ENCODE measurements at regions of chr12 and their contacts with region 1.

Region 1: DNA sequence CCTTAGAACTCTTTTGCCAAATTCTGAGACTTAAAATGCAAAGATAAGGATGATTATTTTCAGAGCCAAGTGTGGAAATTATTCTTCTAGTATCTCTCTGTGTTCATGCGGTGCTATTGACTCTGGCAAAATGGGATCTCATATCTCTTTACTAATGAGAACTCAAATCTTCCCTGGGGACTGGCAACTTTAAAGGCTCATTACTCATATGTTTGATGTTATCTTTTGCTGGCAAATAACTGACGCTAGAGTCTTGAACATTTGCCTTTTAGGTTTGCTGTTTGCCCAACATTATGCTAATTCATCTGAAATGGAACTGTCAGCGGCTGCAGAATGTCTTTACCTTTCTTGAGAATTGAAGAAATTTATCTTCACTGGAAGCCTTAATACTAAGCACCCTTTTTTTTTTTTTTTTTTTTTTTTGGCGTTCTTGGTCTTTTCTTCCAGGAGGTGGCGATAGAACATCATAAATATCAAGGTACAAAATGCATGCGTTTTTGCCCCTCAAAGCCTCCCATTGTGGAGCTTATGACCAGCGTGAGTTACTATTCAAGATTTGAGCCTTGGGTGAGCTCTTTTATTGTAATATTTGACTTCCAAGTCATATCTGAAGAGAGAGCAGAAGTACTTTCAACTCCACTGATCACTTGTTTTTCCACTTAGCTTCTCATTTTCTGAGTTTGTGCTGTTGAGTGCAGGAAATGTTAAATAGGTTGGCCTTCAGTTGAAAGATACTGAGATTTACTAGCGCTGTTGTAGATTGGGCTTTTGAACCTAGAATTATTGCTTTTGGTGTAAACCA is 86.6 kb downstream of the CAND1 start:
- DNase-seq: peak; percentile 39
- H3K4me3 ChIP-seq: no peak overlapping the region
- H3K27ac ChIP-seq: no peak overlapping the region
- H3K4me1 ChIP-seq: no peaks in the 10 kb centered on the region
- H3K27me3 ChIP-seq: no peaks in the 10 kb centered on the region
- CTCF ChIP-seq: peak; percentile 26 to 67

Region 2: GRCh38 chr12:66763467-66763866 is 592.3 kb before region 1 on chr12:
- CTCF ChIA-PET with region 1: interaction called, 20 read pairs
- dilution Hi-C with region 1: no loop called
- in situ Hi-C with region 1: no loop called
- intact Hi-C with region 1: no loop called
- DNase-seq: no peak
- H3K4me3 ChIP-seq: no peak overlapping the region
- H3K27ac ChIP-seq: no peak overlapping the region
- H3K4me1 ChIP-seq: no peaks in the 10 kb centered on the region
- H3K27me3 ChIP-seq: no peaks in the 10 kb centered on the region
- CTCF ChIP-seq: no peak

Region 3: GRCh38 chr12:67006610-67007009 is 349.2 kb before region 1 on chr12:
- CTCF ChIA-PET with region 1: no interaction called
- dilution Hi-C with region 1: no loop called
- in situ Hi-C with region 1: no loop called
- intact Hi-C with region 1: no loop called
- DNase-seq: no peak
- H3K4me3 ChIP-seq: no peak overlapping the region
- H3K27ac ChIP-seq: no peak overlapping the region
- H3K4me1 ChIP-seq: no peaks in the 10 kb centered on the region
- H3K27me3 ChIP-seq: no peaks in the 10 kb centered on the region
- CTCF ChIP-seq: no peak

Region 4: DNA sequence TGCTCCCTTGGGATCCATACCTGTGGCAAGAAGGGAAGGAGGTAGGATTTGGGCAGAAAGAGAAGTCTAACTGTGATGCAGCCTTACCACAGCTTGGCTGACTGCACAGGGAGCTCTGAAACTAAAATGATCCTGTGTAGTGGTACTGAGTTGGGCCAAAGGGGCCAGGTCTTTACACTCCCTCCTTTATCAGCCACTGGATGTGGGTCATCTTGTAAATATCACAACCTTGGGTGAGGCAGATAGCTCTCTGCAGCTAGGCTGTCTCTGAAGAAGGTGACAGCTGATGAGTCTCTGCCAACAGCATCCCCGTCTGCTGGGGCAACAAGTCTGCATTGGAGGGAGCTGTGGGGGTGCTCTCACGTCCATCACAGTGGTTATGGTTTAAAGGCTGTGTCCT is 182.5 kb before region 1 on chr12:
- CTCF ChIA-PET with region 1: no interaction called
- dilution Hi-C with region 1: no loop called
- in situ Hi-C with region 1: no loop called
- intact Hi-C with region 1: no loop called
- DNase-seq: no peak
- H3K4me3 ChIP-seq: no peak overlapping the region
- H3K27ac ChIP-seq: no peak overlapping the region
- H3K4me1 ChIP-seq: no peaks in the 10 kb centered on the region
- H3K27me3 ChIP-seq: peaks cover 5% of the 10 kb centered on the region
- CTCF ChIP-seq: no peak

Region 5: DNA sequence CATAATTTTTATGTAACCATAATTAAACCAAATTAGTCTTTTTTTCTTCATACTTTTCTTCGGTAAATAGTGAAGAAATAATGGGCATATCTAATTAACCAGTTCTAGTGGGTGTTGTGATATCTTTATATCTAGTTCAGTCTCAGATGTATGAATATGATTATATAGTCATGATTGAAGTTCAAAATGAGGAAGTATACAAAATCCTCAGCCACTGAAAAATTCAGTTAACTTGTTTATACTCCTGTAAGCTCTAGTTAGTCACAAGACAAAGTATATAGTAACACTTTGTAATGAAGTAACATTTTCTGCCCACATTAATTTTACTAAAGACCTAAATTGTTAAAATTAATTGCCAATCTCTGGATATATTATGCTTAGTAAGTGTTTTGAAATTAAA is 40.1 kb before region 1 on chr12:
- CTCF ChIA-PET with region 1: no interaction called
- dilution Hi-C with region 1: no loop called
- in situ Hi-C with region 1: no loop called
- intact Hi-C with region 1: no loop called
- DNase-seq: no peak
- H3K4me3 ChIP-seq: no peak overlapping the region
- H3K27ac ChIP-seq: no peak overlapping the region
- H3K4me1 ChIP-seq: no peaks in the 10 kb centered on the region
- H3K27me3 ChIP-seq: no peaks in the 10 kb centered on the region
- CTCF ChIP-seq: no peak

Region 6: DNA sequence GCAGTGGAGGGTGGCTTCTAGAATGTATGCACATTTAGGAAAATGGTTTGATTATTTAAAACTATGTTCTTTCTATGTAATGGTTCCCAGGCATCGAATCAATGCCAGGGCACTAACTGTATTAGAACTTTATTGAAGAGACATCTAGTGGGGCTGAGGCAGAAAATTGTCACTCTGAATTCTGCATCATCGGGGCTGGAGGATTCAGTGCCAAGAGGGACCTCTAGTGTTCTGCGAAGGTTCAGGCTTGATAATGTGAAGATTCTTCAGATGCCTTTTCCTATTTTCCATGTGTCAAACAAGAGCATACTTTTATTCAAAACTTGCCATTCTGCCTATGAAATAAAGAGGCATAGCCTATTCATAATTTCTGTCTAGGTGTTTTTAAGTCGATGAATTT is 59.7 kb after region 1 on chr12:
- CTCF ChIA-PET with region 1: interaction called, 70 read pairs
- dilution Hi-C with region 1: no loop called
- in situ Hi-C with region 1: no loop called
- intact Hi-C with region 1: loop called (anchors 1 kb)
- DNase-seq: peak; percentile 32
- H3K4me3 ChIP-seq: no peak overlapping the region
- H3K27ac ChIP-seq: no peak overlapping the region
- H3K4me1 ChIP-seq: peaks cover 10% of the 10 kb centered on the region
- H3K27me3 ChIP-seq: no peaks in the 10 kb centered on the region
- CTCF ChIP-seq: peak; percentile 32 to 75

Region 7: GRCh38 chr12:67441736-67442346 is 86.1 kb after region 1 on chr12:
- CTCF ChIA-PET with region 1: interaction called, 3 read pairs
- dilution Hi-C with region 1: no loop called
- in situ Hi-C with region 1: no loop called
- intact Hi-C with region 1: loop called (anchors 1 kb)
- DNase-seq: peak; percentile 57
- H3K4me3 ChIP-seq: no peak overlapping the region
- H3K27ac ChIP-seq: no peak overlapping the region
- H3K4me1 ChIP-seq: no peaks in the 10 kb centered on the region
- H3K27me3 ChIP-seq: no peaks in the 10 kb centered on the region
- CTCF ChIP-seq: peak; percentile 73 to 89

Region 8: GRCh38 chr12:67519484-67520433 is 164.0 kb after region 1 on chr12:
- CTCF ChIA-PET with region 1: no interaction called
- dilution Hi-C with region 1: no loop called
- in situ Hi-C with region 1: no loop called
- intact Hi-C with region 1: no loop called
- DNase-seq: no peak
- H3K4me3 ChIP-seq: no peak overlapping the region
- H3K27ac ChIP-seq: no peak overlapping the region
- H3K4me1 ChIP-seq: peaks cover 10% of the 10 kb centered on the region
- H3K27me3 ChIP-seq: no peaks in the 10 kb centered on the region
- CTCF ChIP-seq: no peak

Region 9: GRCh38 chr12:67662910-67663538 is 307.2 kb after region 1 on chr12:
- CTCF ChIA-PET with region 1: interaction called, 19 read pairs
- dilution Hi-C with region 1: no loop called
- in situ Hi-C with region 1: no loop called
- intact Hi-C with region 1: no loop called
- DNase-seq: no peak
- H3K4me3 ChIP-seq: no peak overlapping the region
- H3K27ac ChIP-seq: no peak overlapping the region
- H3K4me1 ChIP-seq: peaks cover 11% of the 10 kb centered on the region
- H3K27me3 ChIP-seq: no peaks in the 10 kb centered on the region
- CTCF ChIP-seq: no peak

Region 10: GRCh38 chr12:67705394-67706370 is 349.9 kb after region 1 on chr12:
- CTCF ChIA-PET with region 1: interaction called, 11 read pairs
- dilution Hi-C with region 1: no loop called
- in situ Hi-C with region 1: no loop called
- intact Hi-C with region 1: no loop called
- DNase-seq: peak; percentile 60
- H3K4me3 ChIP-seq: no peak overlapping the region
- H3K27ac ChIP-seq: no peak overlapping the region
- H3K4me1 ChIP-seq: peaks cover 14% of the 10 kb centered on the region
- H3K27me3 ChIP-seq: no peaks in the 10 kb centered on the region
- CTCF ChIP-seq: no peak

Region 11: GRCh38 chr12:67943226-67943892 is 587.6 kb after region 1 on chr12:
- CTCF ChIA-PET with region 1: interaction called, 7 read pairs
- dilution Hi-C with region 1: no loop called
- in situ Hi-C with region 1: loop called (anchors 10 to 25 kb)
- intact Hi-C with region 1: loop called (anchors 1 kb)
- DNase-seq: peak; percentile 58
- H3K4me3 ChIP-seq: no peak overlapping the region
- H3K27ac ChIP-seq: no peak overlapping the region
- H3K4me1 ChIP-seq: peaks cover 6% of the 10 kb centered on the region
- H3K27me3 ChIP-seq: no peaks in the 10 kb centered on the region
- CTCF ChIP-seq: peak; percentile 61 to 69

Measured in mammary epithelial cell (primary cell).